Right ventricle myocardium superior (tissue), 1 donor: ENCODE measurements at regions of chr9 and their contacts with region 1.

Region 1: GRCh38 chr9:69549310-69550202 is 122.6 kb downstream of the APBA1 start:
- DNase-seq: no peak
- ATAC-seq: peak; percentile 82

Region 2: DNA sequence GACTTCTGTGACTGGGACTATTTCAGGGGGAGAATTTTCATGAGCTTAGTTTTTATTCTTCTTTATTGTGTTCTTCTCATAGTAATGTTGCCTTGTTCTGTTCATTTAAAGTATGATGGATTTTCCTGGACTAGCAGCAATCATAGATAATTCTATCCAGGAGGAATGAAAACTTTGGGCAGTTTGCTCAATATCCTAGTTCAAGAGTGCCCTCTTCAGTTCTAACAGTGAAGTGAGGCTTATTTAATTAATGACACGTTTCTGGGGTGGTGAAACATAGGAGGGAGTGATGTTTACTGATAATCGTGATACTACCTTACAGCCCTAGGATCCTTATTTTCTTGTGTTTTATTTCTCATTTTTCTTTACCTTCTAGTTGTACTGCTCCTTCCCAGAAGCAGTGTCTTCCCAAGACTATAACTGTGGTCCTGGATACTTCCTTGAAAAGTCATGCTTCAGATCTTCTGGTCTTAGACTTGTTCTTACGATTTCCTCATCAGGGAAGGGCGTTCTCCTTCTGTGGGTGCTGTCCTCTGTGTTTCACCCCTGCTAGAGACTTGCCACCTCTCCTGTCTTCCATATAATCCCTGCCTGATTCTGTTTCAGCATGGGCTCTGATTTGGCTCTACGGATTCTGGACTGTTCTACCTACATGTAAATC is 328.4 kb after region 1 on chr9:
- intact Hi-C with region 1: loop called (anchors 10 kb)
- DNase-seq: no peak
- ATAC-seq: peak; percentile 82